Ascending aorta (tissue), 2 donors: ENCODE measurements at regions of chr2 and their contacts with region 1.

Region 1: GRCh38 chr2:46134531-46135181 is 162.6 kb upstream of the EPAS1 start:
- DNase-seq: peak in 1 of 2 donors; percentile 76
- H3K4me3 ChIP-seq: no peak overlapping the region
- H3K27ac ChIP-seq: peak overlapping the region; percentile 82 to 89
- H3K4me1 ChIP-seq: peaks cover 9 to 55% of the 10 kb centered on the region in 2 donors
- H3K27me3 ChIP-seq: no peaks in the 10 kb centered on the region
- CTCF ChIP-seq: no peak

Region 2: DNA sequence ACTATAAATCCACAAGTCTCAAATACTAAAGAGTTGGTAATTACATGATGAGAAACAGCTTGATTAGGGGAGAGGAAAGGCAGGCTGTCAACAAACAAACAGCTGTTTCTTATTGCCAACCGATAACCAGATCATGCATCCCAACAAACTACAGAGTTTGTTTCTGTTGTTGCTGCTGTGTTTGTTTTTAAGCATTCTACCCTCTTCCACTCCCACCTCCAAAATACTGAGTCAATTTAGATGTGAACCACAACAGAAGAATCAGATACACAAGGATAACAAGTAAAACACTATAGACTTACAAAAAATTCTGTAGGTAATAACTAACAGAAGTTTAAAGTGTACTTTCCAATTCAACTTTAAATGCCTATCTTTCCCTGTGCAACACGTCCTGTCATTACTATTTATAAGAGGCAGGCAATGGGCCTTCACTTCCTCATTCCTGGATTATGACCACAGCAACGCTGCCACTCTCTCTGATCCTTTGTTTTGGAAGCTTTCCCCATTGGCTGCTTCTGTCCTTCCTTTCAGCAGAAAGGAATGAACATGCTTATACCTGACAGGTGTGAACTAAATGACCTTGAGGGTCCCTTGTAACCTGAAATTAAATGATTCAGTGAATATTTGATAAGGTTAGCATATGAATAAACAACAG is 675.6 kb before region 1 on chr2:
- intact Hi-C with region 1: no loop called
- DNase-seq: peak; percentile 9 to 69
- H3K4me3 ChIP-seq: no peak overlapping the region
- H3K27ac ChIP-seq: peak overlapping the region; percentile 72 to 81
- H3K4me1 ChIP-seq: peaks cover 0 to 15% of the 10 kb centered on the region in 2 donors
- H3K27me3 ChIP-seq: no peaks in the 10 kb centered on the region
- CTCF ChIP-seq: no peak

Region 3: DNA sequence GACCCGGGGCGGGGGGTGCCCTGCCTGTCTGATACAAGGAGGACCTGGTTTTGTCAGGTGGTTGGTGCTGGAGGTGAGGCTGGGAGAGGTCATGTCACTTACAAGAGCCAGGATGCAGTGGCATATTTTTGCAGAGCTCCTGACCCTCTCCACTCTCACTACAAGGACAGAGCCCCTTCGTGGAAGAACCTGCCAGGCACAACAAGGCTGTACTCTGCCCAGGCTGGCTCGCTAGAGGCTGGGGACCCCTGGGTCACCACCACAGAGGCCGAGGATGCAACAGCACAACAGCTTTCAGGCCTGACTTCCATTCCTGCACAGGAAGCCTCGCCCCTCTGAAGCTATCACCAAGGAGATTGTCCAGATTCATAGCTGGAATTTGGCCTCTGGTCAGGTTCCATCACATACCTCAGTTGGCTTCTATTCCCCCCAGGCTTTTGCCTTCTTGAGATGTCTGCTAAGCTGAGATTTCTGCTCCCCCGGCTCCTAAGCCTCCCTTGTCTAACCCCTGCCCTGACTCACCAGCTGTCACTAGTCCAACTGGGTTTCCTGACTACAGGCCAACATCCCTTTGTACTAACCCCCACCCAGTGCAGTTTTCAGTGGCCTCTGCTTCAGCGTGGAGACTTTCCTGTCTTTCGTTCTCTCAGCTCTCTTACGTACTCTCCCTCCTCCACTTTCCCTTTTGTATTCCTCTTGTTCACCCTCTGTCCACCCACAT is 30.1 kb after region 1 on chr2:
- intact Hi-C with region 1: loop called (anchors 2 kb)
- DNase-seq: peak in 1 of 2 donors; percentile 92
- H3K4me3 ChIP-seq: no peak overlapping the region
- H3K27ac ChIP-seq: peak overlapping the region; percentile 66 to 76
- H3K4me1 ChIP-seq: peaks cover 14 to 38% of the 10 kb centered on the region in 2 donors
- H3K27me3 ChIP-seq: no peaks in the 10 kb centered on the region
- CTCF ChIP-seq: no peak